CD8-positive, alpha-beta T cell (primary cell): ENCODE measurements at regions of chr15 and their contacts with region 1.

Region 1: GRCh38 chr15:36501063-36501678 is 78.3 kb upstream of the CDIN1 start:
- DNase-seq: peak in 2 of 9 experiments; percentile 26 to 38
- ATAC-seq: no peak
- H3K4me3 ChIP-seq: no peak overlapping the region
- H3K4me3 Mint-ChIP-seq: no peak overlapping the region
- H3K27ac ChIP-seq: no peak overlapping the region
- H3K27ac Mint-ChIP-seq: no peak overlapping the region
- H3K4me1 ChIP-seq: no peaks in the 10 kb centered on the region
- H3K4me1 Mint-ChIP-seq: no peaks in the 10 kb centered on the region
- H3K27me3 ChIP-seq: no peaks in the 10 kb centered on the region
- H3K27me3 Mint-ChIP-seq: peaks cover 18% of the 10 kb centered on the region
- CTCF ChIP-seq: peak; percentile 49

Region 2: DNA sequence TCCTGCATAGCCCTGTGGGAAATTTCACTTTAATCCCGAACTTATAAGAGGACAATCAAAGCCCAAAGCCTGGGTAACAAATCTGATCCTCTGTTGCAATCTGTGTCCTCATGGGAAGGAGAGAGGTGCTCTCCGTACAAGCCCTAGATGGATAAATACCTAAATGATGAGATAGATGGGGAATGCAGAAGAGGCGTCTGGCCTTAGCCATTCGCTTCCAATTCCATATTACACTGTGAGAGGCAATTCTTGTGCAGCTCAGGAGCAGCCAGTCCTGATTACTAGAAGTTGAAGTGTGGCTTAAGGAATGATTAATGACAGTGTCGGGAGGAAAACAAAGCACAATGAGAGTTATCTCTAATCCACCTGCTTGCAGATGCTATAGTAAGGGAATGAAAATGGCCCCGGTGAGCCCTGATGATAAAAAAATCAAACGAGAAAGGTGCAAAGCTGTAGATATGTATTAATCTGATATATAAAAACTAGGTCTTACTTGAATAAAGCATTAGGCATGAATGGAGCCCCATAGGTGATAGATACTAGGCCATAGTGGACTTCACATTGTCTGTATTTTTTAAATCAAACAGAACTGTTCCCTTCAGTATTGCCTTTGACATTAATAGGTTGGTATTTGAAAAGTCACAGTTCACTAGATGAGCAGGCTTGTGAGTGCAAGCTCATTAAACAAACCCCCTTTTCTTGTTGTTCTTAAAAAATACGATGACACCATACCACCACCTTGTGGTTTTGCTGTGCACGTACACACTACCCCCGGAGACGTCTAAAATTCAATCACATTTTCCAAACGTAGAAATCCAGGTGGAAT is 1379.1 kb after region 1 on chr15:
- CTCF ChIA-PET with region 1: no interaction called
- POLR2A ChIA-PET with region 1: no interaction called
- intact Hi-C with region 1: loop called in 1 of 2 experiments (anchors 5 kb)
- DNase-seq: peak in 1 of 9 experiments; percentile 3
- ATAC-seq: no peak
- H3K4me3 ChIP-seq: no peak overlapping the region
- H3K4me3 Mint-ChIP-seq: no peak overlapping the region
- H3K27ac ChIP-seq: no peak overlapping the region
- H3K27ac Mint-ChIP-seq: no peak overlapping the region
- H3K4me1 ChIP-seq: no peaks in the 10 kb centered on the region
- H3K4me1 Mint-ChIP-seq: no peaks in the 10 kb centered on the region
- H3K27me3 ChIP-seq: no peaks in the 10 kb centered on the region
- H3K27me3 Mint-ChIP-seq: peaks cover 18% of the 10 kb centered on the region
- CTCF ChIP-seq: no peak

Region 3: GRCh38 chr15:37891766-37892368 is 1390.7 kb after region 1 on chr15:
- CTCF ChIA-PET with region 1: no interaction called
- POLR2A ChIA-PET with region 1: no interaction called
- intact Hi-C with region 1: loop called in 1 of 2 experiments (anchors 5 kb)
- DNase-seq: peak in 2 of 9 experiments; percentile 2 to 18
- ATAC-seq: no peak
- H3K4me3 ChIP-seq: no peak overlapping the region
- H3K4me3 Mint-ChIP-seq: no peak overlapping the region
- H3K27ac ChIP-seq: no peak overlapping the region
- H3K27ac Mint-ChIP-seq: no peak overlapping the region
- H3K4me1 ChIP-seq: no peaks in the 10 kb centered on the region
- H3K4me1 Mint-ChIP-seq: no peaks in the 10 kb centered on the region
- H3K27me3 ChIP-seq: no peaks in the 10 kb centered on the region
- H3K27me3 Mint-ChIP-seq: peaks cover 4% of the 10 kb centered on the region
- CTCF ChIP-seq: no peak